HepG2 (cell line): ENCODE measurements at regions of chr5 and their contacts with region 1.

Region 1: GRCh38 chr5:41524174-41524573 is 13.8 kb upstream of the PLCXD3 start:
- DNase-seq: no peak
- ATAC-seq: no peak
- H3K4me3 ChIP-seq: no peak overlapping the region
- H3K27ac ChIP-seq: no peak overlapping the region
- H3K4me1 ChIP-seq: no peaks in the 10 kb centered on the region
- H3K27me3 ChIP-seq: no peaks in the 10 kb centered on the region
- CTCF ChIP-seq: no peak
- EP300 ChIP-seq: no peak
- POLR2A ChIP-seq: no peak
- RAD21 ChIP-seq: no peak

Region 2: GRCh38 chr5:41270423-41271251 is 253.5 kb before region 1 on chr5:
- CTCF ChIA-PET with region 1: no interaction called
- POLR2A ChIA-PET with region 1: no interaction called
- in situ Hi-C with region 1: no loop called
- intact Hi-C with region 1: loop called (anchors 1 kb)
- DNase-seq: peak; percentile 43
- ATAC-seq: peak; percentile 95
- H3K4me3 ChIP-seq: no peak overlapping the region
- H3K27ac ChIP-seq: no peak overlapping the region
- H3K4me1 ChIP-seq: no peaks in the 10 kb centered on the region
- H3K27me3 ChIP-seq: no peaks in the 10 kb centered on the region; a peak in 1 of 5 replicates
- CTCF ChIP-seq: peak; percentile 76
- EP300 ChIP-seq: no peak
- POLR2A ChIP-seq: no peak
- RAD21 ChIP-seq: peak; percentile 57; the same call in 1 of the 2 replicates

Region 3: GRCh38 chr5:41503310-41503709 is 20.9 kb before region 1 on chr5:
- CTCF ChIA-PET with region 1: no interaction called
- POLR2A ChIA-PET with region 1: no interaction called
- in situ Hi-C with region 1: no loop called
- intact Hi-C with region 1: no loop called
- DNase-seq: no peak
- ATAC-seq: no peak
- H3K4me3 ChIP-seq: no peak overlapping the region
- H3K27ac ChIP-seq: no peak overlapping the region
- H3K4me1 ChIP-seq: no peaks in the 10 kb centered on the region
- H3K27me3 ChIP-seq: no peaks in the 10 kb centered on the region
- CTCF ChIP-seq: no peak
- EP300 ChIP-seq: no peak
- POLR2A ChIP-seq: no peak
- RAD21 ChIP-seq: no peak

Region 4: DNA sequence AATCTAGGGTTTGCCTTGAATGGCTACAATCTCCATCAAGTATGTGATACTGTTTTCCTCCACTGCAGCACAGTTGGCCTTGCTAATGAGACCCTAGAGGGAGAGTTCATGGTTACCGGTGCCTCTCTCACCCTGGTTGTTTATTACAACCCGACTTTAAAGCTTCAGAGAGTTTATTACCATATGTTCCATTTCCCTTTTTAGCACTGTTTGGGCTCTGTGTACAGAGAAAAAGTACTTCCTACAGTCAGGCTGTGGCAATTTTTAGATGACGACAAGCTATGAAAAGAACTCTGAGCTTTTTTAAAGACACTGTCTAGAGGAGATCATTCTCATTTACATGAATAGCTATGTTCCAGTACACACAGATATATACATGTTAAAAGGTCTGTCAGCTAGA is 35.0 kb after region 1 on chr5:
- CTCF ChIA-PET with region 1: no interaction called
- POLR2A ChIA-PET with region 1: no interaction called
- in situ Hi-C with region 1: no loop called
- intact Hi-C with region 1: no loop called
- DNase-seq: no peak
- ATAC-seq: no peak
- H3K4me3 ChIP-seq: no peak overlapping the region
- H3K27ac ChIP-seq: no peak overlapping the region
- H3K4me1 ChIP-seq: no peaks in the 10 kb centered on the region
- H3K27me3 ChIP-seq: no peaks in the 10 kb centered on the region
- CTCF ChIP-seq: no peak
- EP300 ChIP-seq: no peak
- POLR2A ChIP-seq: no peak
- RAD21 ChIP-seq: no peak

Region 5: DNA sequence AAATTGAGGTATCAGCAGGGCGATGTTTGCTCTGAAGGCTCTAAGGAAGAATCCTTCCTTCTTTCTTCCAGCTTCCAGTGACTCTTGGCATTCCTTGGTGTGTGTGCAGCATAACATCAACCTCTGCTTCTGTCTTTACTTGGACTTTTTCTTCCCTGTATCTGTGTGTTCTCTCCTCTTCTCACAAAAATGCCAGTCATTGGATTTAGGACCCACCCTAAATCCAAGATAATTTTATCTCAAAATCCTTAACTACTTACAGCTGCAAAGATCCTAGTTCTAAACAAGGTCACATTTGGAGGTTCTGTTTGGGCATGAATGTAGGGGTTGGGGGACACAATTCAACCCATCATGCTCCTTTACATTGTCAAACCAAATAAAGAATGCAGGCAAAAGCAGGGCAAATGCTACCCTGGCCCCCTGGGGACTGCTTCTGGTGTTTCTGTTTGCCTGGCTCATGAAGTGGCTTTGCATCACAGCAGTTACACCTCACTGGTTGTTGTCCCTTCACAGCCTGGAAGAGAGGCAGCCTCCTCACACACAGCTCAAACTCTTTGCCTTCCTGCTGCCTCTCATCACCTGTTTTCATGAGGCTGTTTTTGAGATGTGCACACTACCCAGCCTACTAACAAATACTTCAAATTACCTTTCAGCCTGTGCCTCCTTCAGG is 51.1 kb after region 1 on chr5:
- CTCF ChIA-PET with region 1: no interaction called
- POLR2A ChIA-PET with region 1: no interaction called
- in situ Hi-C with region 1: no loop called
- intact Hi-C with region 1: no loop called
- DNase-seq: no peak
- ATAC-seq: no peak
- H3K4me3 ChIP-seq: no peak overlapping the region
- H3K27ac ChIP-seq: no peak overlapping the region
- H3K4me1 ChIP-seq: no peaks in the 10 kb centered on the region
- H3K27me3 ChIP-seq: no peaks in the 10 kb centered on the region
- CTCF ChIP-seq: no peak
- EP300 ChIP-seq: no peak
- POLR2A ChIP-seq: no peak
- RAD21 ChIP-seq: no peak